ENCODE measurements at regions of chr9 and their contacts with region 1.

Region 1: DNA sequence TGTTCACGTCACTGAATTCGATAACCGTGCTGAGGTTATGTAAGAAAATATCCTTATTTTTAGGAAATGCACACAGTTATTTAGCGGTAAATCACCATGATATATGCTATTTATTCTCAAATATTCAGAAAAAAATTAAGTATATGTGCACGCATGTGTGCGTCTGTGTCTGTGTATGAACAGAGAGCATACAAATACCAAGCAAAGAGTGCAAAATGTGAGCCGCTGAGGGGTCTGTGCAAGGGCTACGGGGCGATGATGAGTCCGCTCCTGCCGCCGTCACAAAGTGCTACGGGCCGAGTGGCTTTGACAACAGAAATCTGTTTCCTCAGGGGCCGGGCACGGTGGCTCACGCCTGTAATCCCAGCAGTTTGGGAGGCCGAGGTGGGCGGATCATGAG is 6.9 kb upstream of the UCK1 start:
- DNase-seq: no peak
- ATAC-seq: no peak

Region 2: DNA sequence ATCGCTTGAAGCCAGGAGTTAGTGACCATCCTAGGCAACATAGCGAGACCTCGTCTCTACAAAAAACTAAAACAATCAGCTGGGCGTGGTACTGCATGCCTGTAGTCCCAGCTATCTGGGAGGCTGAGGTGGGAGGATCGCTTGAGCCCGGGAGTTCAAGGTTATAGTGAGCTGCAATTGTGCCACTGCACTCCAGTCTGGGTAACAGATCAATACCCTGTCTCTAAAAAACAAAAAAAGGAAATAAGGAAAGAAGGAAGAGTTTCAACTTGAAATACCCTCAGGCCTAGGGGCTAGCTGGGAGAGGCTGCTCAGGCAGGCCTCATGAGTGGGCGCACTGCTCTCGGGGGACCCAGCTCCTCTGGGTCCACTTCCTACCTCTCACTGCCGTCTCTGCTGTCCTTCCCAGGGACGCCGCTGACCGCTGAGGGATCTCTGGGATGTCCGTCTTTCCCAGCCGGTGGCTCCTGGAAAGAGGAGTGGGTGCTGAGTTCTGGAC is 63.8 kb after region 1 on chr9:
- intact Hi-C with region 1: loop called (anchors 2 kb)
- DNase-seq: no peak
- ATAC-seq: no peak